RWPE1 (cell line): ENCODE measurements at regions of chr10 and their contacts with region 1.

Region 1: GRCh38 chr10:119750391-119751230 is 24.8 kb downstream of the INPP5F start:
- DNase-seq: peak; percentile 67
- H3K27ac ChIP-seq: no peak overlapping the region
- CTCF ChIP-seq: peak; percentile 95

Region 2: DNA sequence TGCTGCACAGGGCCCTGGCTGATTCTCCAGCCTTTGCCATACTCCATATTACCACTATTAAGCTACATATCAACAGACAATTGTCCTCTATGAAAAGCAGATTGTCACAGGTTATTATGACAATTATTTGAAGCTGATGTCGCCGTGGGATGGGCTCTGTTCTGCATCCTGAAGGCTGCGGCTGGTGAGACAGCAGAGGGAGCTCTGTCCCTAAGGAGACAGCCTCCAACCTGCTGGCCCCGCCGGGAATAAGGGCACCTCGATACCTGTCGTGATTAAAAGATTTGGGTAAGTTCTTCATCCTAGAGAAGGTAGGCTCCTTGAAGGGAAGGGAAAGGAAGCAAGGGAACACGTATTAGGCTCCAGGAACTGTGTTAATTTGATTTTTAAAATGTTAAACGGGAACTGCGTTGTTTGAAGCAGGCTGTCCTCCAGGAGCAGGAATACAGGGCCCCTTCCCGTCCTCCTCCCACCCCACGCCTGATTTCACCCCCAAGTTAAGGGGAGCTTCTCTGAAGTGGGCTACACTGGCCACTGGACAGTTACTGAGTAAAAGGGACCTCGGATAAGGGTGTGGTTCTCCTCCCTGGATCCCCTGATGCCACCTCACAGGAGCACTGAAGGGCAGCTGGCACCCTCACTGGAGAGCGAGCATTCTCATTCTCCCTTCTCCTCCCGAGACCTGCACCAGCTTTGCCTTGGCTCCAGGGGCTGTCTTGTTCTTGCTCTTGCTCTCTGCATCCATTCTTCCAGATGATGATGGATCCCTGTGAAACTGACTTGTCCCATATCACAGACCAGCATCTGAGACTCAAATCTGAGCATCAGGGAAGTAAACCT is 142.1 kb before region 1 on chr10:
- CTCF ChIA-PET with region 1: interaction called, 18 read pairs
- POLR2A ChIA-PET with region 1: no interaction called
- DNase-seq: peak; percentile 63
- H3K27ac ChIP-seq: no peak overlapping the region
- CTCF ChIP-seq: peak; percentile 87

Region 3: DNA sequence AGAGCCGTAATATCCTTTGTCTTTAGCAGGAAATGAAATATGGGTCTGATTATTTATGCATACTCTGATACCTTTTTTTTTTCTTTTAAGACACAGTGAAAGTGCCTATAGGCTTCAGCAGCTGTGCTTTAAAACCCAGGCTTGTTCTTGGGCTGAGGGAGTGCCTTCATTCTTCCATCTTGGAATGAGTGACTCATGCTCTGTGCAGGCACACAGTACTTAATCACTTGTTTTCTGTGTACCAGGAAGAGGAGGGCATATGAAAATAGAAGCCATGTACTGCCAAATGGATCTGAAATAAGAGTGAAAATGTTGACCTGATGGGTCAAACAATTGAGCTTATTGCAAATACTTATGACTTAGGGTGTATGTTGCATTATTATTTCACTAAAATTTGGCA is 12.8 kb before region 1 on chr10:
- CTCF ChIA-PET with region 1: interaction called, 13 read pairs
- POLR2A ChIA-PET with region 1: no interaction called
- DNase-seq: peak; percentile 95
- H3K27ac ChIP-seq: no peak overlapping the region
- CTCF ChIP-seq: no peak

Region 4: DNA sequence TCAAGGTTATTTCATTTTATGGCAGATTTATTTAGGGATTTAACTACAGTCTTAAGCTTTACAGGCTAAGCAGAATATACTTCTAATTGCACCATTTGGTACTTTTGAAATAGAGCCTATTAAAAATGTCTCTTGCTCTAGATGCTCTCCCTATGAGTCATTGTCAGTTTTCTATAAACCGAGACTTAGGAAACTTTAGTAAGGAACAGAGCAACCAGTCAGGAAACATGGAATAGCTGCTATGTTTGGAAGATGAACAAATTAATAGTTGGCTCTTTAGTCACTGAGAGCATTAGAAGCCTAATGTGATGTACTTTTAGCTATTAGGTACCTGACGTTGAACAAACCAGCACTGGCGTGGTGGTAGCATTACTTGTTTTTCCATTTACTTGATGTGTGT is 10.5 kb after region 1 on chr10:
- CTCF ChIA-PET with region 1: interaction called, 20 read pairs
- POLR2A ChIA-PET with region 1: no interaction called
- DNase-seq: peak; percentile 55
- H3K27ac ChIP-seq: no peak overlapping the region
- CTCF ChIP-seq: no peak

Region 5: DNA sequence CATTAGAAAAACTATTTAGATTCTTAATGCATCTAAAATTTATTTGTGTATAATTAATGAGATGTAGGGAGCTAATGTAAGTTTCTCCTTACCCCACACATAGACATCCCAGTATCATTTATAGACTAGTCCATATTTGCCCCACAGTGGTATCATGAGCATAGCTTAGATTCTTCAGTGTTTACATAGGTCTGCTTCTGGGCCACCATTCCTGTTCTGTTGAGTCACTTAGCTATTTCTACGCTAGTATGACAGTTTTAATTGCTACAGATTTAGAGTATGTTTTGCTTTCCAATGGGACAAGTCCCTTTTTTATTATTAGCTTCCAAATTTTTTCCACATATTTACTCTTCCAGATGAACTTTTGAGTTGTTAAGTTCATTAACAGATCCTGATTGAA is 52.7 kb after region 1 on chr10:
- CTCF ChIA-PET with region 1: interaction called, 13 read pairs
- POLR2A ChIA-PET with region 1: no interaction called
- DNase-seq: no peak
- H3K27ac ChIP-seq: no peak overlapping the region
- CTCF ChIP-seq: no peak

Region 6: GRCh38 chr10:119834188-119834587 is 83.6 kb after region 1 on chr10:
- CTCF ChIA-PET with region 1: interaction called, 12 read pairs
- POLR2A ChIA-PET with region 1: no interaction called
- DNase-seq: no peak
- H3K27ac ChIP-seq: no peak overlapping the region
- CTCF ChIP-seq: no peak

Region 7: GRCh38 chr10:119859420-119860258 is 109.0 kb after region 1 on chr10:
- CTCF ChIA-PET with region 1: interaction called, 26 read pairs
- POLR2A ChIA-PET with region 1: no interaction called
- DNase-seq: peak; percentile 30
- H3K27ac ChIP-seq: no peak overlapping the region
- CTCF ChIP-seq: peak; percentile 71

Region 8: GRCh38 chr10:120460776-120461175 is 710.2 kb after region 1 on chr10:
- CTCF ChIA-PET with region 1: no interaction called
- POLR2A ChIA-PET with region 1: no interaction called
- DNase-seq: peak; percentile 23
- H3K27ac ChIP-seq: no peak overlapping the region
- CTCF ChIP-seq: no peak